ENCODE measurements at regions of chr22 and their contacts with region 1.

Region 1: DNA sequence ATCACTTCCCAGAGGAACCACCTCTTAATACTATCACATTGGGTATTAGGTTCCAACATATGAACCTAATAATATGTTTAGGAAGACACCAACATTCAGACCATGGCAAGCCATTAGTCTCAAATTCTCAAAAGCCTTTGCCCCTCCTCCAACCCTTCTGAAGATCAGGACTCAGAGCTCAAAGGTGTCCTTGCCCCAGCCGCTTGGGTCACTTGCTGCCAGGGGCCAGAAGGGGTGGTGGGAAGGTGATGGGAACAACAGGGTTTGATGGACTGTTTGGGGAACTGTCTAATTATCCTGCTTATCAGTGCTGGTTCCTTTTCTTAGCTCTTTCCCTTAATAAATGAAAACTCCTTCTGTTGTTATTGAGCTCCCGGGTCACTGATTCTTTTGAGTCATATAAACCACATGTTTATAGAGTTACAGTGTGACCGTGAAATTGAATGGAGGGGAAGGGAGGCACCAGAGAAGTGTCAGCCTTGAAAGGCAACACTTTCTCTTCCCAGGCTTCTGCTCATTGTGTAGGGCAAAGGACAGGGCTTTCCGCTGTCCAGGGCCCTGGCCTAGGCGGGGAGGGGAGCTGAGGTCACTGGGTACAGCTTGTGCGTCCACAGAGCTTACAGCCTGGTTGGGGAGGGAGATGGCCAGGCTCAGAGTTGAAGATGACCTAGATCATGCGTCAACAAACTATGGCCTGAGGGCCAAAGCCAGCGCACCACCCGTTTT is 105.1 kb downstream of the FBXO7 start:
- DNase-seq: peak; percentile 50
- ATAC-seq: peak; percentile 85
- H3K4me3 ChIP-seq: no peak overlapping the region
- H3K27ac ChIP-seq: peak overlapping the region; percentile 43
- H3K4me1 ChIP-seq: peaks cover 62% of the 10 kb centered on the region
- H3K27me3 ChIP-seq: no peaks in the 10 kb centered on the region
- CTCF ChIP-seq: no peak
- EP300 ChIP-seq: 0 out of 4 replicates have a peak, but pooled peaks of 1 of the 2 experiments have one; percentile 20
- POLR2A ChIP-seq: no peak
- RAD21 ChIP-seq: no peak

Region 2: DNA sequence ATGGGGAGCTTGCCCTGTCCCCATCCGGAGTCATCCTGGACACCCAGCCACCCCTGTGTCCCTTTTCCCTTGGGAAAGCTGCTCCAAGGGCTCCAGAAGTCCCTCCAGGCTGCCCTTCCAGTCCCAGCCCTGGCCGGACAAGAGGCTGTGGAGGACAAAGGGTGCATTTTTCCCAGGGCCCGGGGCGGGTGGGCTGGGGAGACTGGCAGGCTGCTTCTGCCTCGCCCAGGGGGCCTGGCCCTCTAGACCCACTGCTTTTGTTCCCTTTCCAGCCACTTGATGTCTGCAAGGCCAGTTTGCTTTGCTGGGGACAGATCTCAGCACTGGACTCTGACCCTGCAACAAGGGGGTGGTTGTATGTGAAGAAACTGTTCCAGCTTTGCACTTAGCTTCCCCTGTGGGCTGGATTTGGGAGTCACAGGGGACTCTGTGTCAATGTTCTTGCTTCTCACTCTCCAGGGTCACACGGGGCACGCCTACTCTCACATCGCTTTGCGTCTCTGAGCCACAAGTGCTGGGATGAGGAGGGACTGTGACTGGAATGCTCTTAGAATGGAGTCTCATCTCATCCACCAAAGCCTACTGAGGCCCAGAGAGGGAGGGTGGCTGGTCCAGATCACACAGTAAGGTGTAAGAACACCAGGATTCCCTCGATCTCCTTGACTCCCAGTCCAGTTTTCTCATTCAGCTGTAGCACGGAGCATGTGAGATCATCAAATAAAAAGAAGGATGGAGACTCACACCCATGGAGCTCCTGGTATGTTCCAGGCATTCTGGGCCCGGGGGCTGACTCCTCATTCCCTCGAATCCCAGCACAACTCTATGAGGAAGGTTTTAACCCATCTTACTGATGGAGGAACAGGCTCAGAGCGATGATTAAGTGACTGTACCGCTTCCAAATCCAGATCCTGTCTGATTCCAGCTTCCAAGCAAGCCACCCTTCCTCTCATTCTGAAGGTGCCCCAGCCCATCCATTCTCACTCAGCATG is 45.1 kb before region 1 on chr22:
- CTCF ChIA-PET with region 1: no interaction called
- POLR2A ChIA-PET with region 1: interaction called, 143 read pairs
- in situ Hi-C with region 1: no loop called
- intact Hi-C with region 1: loop called (anchors 1 kb)
- DNase-seq: peak; percentile 87
- ATAC-seq: peak; percentile 37
- H3K4me3 ChIP-seq: peak overlapping the region; percentile 31 to 72 (median 40); a peak in 5 of 6 replicates
- H3K27ac ChIP-seq: peak overlapping the region; percentile 78
- H3K4me1 ChIP-seq: peaks cover 91% of the 10 kb centered on the region
- H3K27me3 ChIP-seq: no peaks in the 10 kb centered on the region
- CTCF ChIP-seq: peak; percentile 34; the same call in 1 of the 2 replicates
- EP300 ChIP-seq: peak in 1 of 2 experiments; percentile 66; a peak in 1 of 4 replicates
- POLR2A ChIP-seq: peak in 1 of 2 experiments; percentile 55; a peak in 2 of 4 replicates
- RAD21 ChIP-seq: no peak

Region 3: DNA sequence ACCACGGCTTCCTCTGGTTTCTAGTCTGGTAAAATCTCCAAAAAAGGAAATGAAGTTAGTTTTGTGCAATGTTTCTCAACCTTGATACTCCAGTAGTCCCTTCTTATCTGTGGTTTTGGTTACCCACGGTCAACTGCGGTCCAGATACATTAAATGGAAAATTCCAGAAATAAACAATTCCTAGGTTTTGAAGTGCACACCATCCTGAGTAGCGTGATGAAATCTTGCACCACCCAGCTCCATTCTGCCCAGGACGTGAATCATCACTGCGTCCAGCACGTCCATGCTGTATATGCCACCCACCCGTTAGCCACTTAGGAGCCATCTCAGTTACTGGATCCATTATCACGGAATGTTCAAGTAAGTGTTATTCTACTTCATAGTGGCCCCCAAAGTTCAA is 11.9 kb after region 1 on chr22:
- CTCF ChIA-PET with region 1: no interaction called
- POLR2A ChIA-PET with region 1: no interaction called
- in situ Hi-C with region 1: no loop called
- intact Hi-C with region 1: no loop called
- DNase-seq: no peak
- ATAC-seq: no peak
- H3K4me3 ChIP-seq: no peak overlapping the region
- H3K27ac ChIP-seq: no peak overlapping the region
- H3K4me1 ChIP-seq: peaks cover 11% of the 10 kb centered on the region
- H3K27me3 ChIP-seq: no peaks in the 10 kb centered on the region
- CTCF ChIP-seq: no peak
- EP300 ChIP-seq: no peak
- POLR2A ChIP-seq: no peak
- RAD21 ChIP-seq: no peak

Region 4: GRCh38 chr22:32603656-32604435 is 24.2 kb after region 1 on chr22:
- CTCF ChIA-PET with region 1: no interaction called
- POLR2A ChIA-PET with region 1: no interaction called
- in situ Hi-C with region 1: no loop called
- intact Hi-C with region 1: loop called (anchors 1 kb)
- DNase-seq: no peak
- ATAC-seq: no peak
- H3K4me3 ChIP-seq: no peak overlapping the region
- H3K27ac ChIP-seq: no peak overlapping the region
- H3K4me1 ChIP-seq: peaks cover 16% of the 10 kb centered on the region
- H3K27me3 ChIP-seq: no peaks in the 10 kb centered on the region
- CTCF ChIP-seq: no peak
- EP300 ChIP-seq: no peak
- POLR2A ChIP-seq: no peak
- RAD21 ChIP-seq: no peak

Region 5: DNA sequence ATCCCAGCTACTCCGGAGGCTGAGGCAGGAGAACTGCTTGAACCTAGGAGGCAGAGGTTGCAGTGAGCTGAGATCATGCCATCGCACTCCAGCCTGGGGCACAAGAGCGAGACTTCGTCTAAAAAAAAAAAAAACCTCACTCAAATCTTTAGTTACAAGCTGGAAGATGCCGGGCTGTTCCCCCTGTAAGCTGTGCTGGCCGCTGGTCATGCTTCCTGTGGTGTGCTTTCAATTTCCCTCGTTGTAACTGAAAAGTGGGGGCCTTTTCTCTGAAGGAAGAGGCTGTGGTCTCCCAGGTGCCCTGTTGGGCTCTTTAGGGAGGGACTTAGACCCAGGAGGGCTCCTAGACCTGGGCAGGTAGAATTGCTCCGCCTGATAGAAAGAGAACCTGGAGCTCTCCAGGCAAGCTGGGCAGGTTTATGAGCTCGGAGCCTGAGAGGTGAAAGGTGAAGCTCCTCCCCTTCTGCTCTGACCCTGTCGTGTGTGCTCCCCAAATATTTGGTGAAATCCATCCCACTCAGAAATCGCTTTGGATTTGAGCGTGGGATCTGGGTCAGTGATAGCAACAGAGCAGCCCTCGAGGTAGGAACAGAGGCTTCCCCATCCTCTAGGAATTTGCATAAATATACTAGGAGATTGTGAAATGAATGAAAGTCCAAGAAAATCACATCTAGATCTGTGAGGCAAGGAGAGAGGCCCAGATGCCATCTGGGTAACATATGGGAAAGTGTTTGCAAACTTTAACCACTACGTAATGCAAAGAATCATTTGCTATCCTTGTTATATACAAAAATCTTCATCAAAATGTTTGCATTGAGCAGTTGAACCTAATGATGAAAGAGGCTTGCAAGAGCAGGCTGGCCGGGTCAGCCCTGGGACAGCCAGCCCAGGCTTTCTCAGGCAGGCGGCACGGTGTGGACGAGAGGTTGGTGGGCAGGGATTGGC is 49.2 kb after region 1 on chr22:
- CTCF ChIA-PET with region 1: no interaction called
- POLR2A ChIA-PET with region 1: interaction called, 30 read pairs
- in situ Hi-C with region 1: no loop called
- intact Hi-C with region 1: no loop called
- DNase-seq: peak; percentile 55
- ATAC-seq: peak; percentile 78
- H3K4me3 ChIP-seq: peak overlapping the region in 1 of 3 experiments; percentile 17; a peak in 1 of 6 replicates
- H3K27ac ChIP-seq: peak overlapping the region; percentile 53
- H3K4me1 ChIP-seq: peaks cover 70% of the 10 kb centered on the region
- H3K27me3 ChIP-seq: no peaks in the 10 kb centered on the region
- CTCF ChIP-seq: no peak
- EP300 ChIP-seq: 0 out of 4 replicates have a peak, but pooled peaks of 1 of the 2 experiments have one; percentile 18
- POLR2A ChIP-seq: no peak
- RAD21 ChIP-seq: no peak

Measured in HepG2 (cell line).